Activated CD4-positive, alpha-beta T cell treated with anti-CD3 and anti-CD28 coated beads, Interleukin-2, amount 10 ng/mL, durations not matched to agents 24 days and 14 days (primary cell): ENCODE measurements at regions of chr5 and their contacts with region 1.

Region 1: DNA sequence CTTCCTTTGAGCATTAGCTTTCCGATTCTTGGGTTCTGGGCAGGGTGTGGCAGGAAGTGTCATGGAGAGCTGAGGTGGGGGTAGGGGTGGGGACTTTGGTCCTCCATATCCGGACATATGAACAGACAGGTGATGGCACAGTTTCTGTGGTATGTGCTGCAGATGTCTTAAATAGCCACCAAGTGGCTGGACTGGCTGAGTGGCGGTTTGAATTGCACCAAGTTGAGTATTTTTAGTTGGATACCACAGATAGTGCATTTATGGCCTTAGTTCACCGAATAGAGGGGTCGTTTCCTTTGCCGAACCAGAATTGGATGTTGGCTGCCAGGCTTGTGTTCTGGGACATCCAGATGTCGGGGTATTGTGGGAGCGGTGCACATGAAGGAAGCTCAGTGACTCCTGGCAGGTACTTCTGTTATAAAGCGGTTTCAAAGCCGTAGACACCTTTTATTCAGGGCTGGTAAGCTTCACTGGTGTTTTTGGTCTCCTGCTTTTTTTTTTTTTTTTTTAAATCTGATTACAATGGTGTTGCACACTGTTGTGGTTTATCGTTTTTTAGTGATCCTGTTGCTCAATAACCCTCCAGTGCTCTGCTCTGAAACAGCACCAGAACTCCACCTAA is 15.1 kb upstream of the TNFAIP8 start:
- DNase-seq: peak; percentile 90
- H3K4me3 Mint-ChIP-seq: peak overlapping the region; percentile 82
- H3K27ac Mint-ChIP-seq: peak overlapping the region; percentile 92
- H3K4me1 Mint-ChIP-seq: peaks cover 82% of the 10 kb centered on the region
- H3K27me3 Mint-ChIP-seq: no peaks in the 10 kb centered on the region

Region 2: GRCh38 chr5:119031905-119032304 is 308.8 kb before region 1 on chr5:
- intact Hi-C with region 1: loop called (anchors 5 kb)
- DNase-seq: no peak
- H3K4me3 Mint-ChIP-seq: peak overlapping the region; percentile 26
- H3K27ac Mint-ChIP-seq: peak overlapping the region; percentile 7
- H3K4me1 Mint-ChIP-seq: peaks cover 23% of the 10 kb centered on the region
- H3K27me3 Mint-ChIP-seq: no peaks in the 10 kb centered on the region

Region 3: DNA sequence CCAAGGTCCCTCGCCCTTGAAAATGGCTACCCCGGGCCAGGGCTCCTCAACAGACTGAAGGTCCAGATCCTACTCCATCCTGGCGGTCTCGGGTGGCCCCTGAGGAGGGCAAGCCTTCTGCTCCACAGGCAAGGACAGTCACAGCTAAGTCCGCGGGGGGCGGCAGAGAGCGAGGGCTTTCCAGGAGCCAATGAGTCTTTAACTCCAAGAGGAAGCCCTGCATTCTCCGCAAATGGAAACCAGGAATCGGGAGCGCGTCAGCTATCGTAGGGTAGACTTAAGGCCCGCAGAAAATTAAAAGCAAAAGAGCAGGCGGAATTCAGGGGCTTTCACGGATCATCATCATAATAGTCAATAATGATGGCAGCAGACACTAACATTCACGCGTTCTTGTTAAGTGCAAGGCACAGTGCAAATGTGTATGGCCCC is 72.7 kb before region 1 on chr5:
- intact Hi-C with region 1: loop called (anchors 1 kb)
- DNase-seq: peak; percentile 93
- H3K4me3 Mint-ChIP-seq: peak overlapping the region; percentile 95
- H3K27ac Mint-ChIP-seq: peak overlapping the region; percentile 97
- H3K4me1 Mint-ChIP-seq: peaks cover 54% of the 10 kb centered on the region
- H3K27me3 Mint-ChIP-seq: no peaks in the 10 kb centered on the region

Region 4: GRCh38 chr5:119315516-119315949 is 25.2 kb before region 1 on chr5:
- intact Hi-C with region 1: loop called (anchors 1 kb)
- DNase-seq: peak; percentile 86
- H3K4me3 Mint-ChIP-seq: peak overlapping the region; percentile 67
- H3K27ac Mint-ChIP-seq: peak overlapping the region; percentile 89
- H3K4me1 Mint-ChIP-seq: peaks cover 81% of the 10 kb centered on the region
- H3K27me3 Mint-ChIP-seq: no peaks in the 10 kb centered on the region

Region 5: GRCh38 chr5:119367502-119368237 is 27.0 kb after region 1 on chr5:
- intact Hi-C with region 1: loop called (anchors 1 kb)
- DNase-seq: peak; percentile 75
- H3K4me3 Mint-ChIP-seq: peak overlapping the region; percentile 78
- H3K27ac Mint-ChIP-seq: peak overlapping the region; percentile 96
- H3K4me1 Mint-ChIP-seq: peaks cover 69% of the 10 kb centered on the region
- H3K27me3 Mint-ChIP-seq: no peaks in the 10 kb centered on the region